ENCODE measurements at regions of chr16 and their contacts with region 1.

Region 1: GRCh38 chr16:67159593-67160406 is at the starts of genes FBXL8 and TRADD:
- DNase-seq: peak; percentile 87
- CTCF ChIP-seq: peak; percentile 52

Region 2: DNA sequence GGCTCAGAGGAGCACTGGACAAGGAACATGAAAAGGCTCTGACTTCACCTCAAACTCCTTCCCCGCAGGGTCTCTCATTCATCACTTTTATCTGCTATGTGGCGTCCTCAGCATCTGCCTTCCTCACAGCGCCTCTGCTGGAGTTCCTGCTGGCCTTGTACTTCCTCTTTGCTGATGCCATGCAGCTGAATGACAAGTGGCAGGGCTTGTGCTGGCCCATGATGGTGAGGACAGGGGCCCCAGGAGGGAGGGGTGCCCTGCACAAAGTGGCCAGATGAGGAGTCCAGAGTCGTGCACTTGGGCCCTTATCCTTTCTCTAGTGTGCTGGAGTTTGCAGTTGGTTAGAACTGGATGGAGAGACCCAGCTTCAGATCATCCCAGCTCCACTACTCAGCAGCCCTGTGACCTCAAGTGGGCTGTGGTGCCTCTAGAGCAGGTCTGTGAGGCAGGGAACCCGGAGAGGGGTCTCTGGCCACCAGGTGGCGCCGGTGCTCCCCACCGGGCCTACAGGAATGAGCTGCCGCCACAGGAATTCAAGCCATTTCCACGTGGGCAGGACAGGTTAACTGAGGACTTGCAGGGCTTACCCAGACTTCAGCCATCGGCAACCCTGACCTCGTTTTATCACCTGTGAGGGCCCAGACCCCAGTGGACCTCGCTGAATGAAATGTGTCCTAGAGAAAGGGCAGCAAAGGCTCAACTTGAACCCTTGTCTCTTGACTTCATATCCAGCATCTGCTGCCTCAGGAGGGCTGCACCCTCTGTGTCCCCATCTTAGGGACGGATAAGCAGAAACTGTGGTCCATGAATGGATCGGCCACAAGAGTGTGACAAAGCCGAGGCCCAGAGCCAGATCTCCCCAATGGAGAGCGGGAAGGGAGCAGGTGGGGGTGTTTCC is 551.3 kb before region 1 on chr16:
- CTCF ChIA-PET with region 1: no interaction called
- POLR2A ChIA-PET with region 1: no interaction called
- DNase-seq: peak; percentile 90
- CTCF ChIP-seq: peak; percentile 86

Region 3: GRCh38 chr16:66954097-66954659 is 205.6 kb before region 1 on chr16:
- CTCF ChIA-PET with region 1: interaction called, 18 read pairs
- POLR2A ChIA-PET with region 1: no interaction called
- DNase-seq: peak; percentile 79
- CTCF ChIP-seq: peak; percentile 84

Region 4: DNA sequence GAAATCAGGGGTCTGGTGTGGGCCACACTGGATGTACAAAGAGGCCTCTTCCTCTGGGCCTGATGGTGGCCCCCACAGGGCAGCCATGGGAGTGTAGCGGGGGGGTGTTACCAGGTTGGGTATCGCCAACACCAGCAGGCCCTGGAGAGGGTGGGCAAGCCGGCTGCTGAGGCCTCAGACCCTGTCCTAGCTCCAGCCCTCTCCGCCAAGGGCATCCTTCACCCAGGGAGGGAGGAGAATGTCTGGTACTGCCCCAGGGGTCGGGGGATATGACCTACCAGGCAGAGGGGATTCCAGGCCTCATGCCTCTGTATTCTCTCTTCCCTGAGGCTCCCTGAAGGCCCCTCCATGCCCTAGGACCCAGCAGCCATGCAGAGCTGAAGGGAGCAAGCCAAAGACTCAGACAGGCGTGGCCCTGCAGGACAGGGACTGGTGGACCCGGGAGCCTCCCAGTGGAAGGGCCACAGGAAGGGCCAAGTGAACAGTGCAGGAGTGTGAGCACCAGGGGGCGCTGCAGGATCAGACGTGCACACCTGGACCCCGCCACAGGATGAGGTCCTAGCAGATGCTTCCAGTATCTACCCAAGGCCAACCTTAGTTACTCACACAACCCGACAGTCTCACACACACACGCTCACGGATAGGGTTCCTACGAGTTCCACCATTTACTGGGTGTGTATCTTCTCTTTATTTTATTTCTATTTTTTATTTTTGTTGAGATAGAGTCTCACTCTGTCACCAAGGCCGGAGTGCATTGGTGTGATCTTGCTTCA is 182.3 kb before region 1 on chr16:
- CTCF ChIA-PET with region 1: interaction called, 48 read pairs
- POLR2A ChIA-PET with region 1: no interaction called
- DNase-seq: peak; percentile 90
- CTCF ChIP-seq: peak; percentile 93

Region 5: DNA sequence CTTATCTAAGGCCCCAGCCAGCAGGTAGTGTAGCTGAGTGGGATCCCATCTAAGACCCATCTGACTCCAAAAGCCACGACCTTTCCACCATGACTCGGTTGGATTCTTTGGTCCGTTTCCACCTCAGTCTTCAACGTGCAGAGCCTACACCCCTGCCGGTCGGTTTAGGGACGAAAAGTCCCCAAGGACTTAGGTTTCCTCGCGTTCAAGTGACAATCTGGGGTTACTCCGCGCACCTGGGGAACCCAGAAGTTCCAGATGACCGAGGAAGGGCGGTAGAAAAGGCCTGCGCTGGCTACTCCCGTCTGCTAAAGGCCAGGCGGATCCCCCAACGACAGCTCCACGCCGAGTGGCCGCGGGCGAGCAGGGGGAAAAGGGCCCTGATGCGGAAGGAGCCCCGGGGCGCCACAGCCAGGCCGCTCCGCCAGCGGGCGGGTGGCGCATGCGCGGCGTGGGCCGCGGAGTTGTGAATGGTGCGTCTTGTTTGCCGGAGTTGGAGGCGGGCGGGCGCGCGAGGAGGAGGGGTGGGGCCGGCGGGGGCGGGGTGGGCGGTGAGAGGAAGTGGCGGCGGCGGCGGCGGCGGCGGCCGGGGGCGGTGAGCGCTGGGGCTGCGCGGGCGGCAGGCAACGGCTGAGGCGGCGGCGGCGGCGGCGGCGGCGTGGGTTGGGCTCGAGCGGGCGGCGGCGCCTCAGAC is 131.1 kb before region 1 on chr16 and contains the start of gene CBFB:
- CTCF ChIA-PET with region 1: interaction called, 32 read pairs
- POLR2A ChIA-PET with region 1: no interaction called
- DNase-seq: peak; percentile 98
- CTCF ChIP-seq: no peak

Region 6: GRCh38 chr16:67129422-67129821 is 30.4 kb before region 1 on chr16:
- CTCF ChIA-PET with region 1: interaction called, 33 read pairs
- POLR2A ChIA-PET with region 1: no interaction called
- DNase-seq: no peak
- CTCF ChIP-seq: no peak

Region 7: DNA sequence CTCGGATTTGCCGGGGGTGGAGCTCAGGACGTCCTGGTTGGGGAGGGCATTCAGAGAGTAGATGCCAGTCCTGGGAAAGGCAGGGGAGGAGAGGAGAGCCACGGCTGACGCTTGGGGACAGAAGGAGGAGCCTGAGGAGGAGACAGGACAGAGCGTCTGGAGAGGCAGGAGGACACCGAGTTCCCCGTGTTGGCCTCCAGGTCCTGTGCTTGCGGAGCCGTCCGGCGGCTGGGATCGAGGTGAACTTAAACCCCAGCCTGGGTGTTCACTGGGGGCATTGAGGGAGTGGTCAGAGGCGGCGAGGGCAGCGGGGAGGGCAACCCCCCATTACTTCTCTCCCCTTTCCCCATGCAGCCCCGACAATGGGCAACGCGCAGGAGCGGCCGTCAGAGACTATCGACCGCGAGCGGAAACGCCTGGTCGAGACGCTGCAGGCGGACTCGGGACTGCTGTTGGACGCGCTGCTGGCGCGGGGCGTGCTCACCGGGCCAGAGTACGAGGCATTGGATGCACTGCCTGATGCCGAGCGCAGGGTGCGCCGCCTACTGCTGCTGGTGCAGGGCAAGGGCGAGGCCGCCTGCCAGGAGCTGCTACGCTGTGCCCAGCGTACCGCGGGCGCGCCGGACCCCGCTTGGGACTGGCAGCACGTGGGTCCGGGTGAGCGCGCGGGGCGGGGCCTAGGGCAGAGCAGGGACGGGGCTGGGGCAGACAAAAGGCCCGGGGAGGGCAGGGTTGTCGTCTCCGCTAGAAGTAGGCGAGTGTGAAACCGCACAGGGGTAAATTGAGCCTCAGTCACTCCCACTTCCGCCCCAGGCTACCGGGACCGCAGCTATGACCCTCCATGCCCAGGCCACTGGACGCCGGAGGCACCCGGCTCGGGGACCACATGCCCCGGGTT is 14.3 kb after region 1 on chr16:
- CTCF ChIA-PET with region 1: interaction called, 45 read pairs
- POLR2A ChIA-PET with region 1: interaction called, 4 read pairs
- DNase-seq: peak; percentile 77
- CTCF ChIP-seq: no peak

Region 8: GRCh38 chr16:68275611-68276191 is 1115.9 kb after region 1 on chr16:
- CTCF ChIA-PET with region 1: no interaction called
- POLR2A ChIA-PET with region 1: no interaction called
- DNase-seq: peak; percentile 64
- CTCF ChIP-seq: no peak